ENCODE measurements at regions of chrX and their contacts with region 1.

Region 1: GRCh38 chrX:48696301-48697181 is at the start of gene SUV39H1:
- DNase-seq: peak; percentile 81
- ATAC-seq: peak; percentile 98
- H3K4me3 ChIP-seq: peak within 1 kb of the TSS; percentile 64
- H3K27ac ChIP-seq: peak within 1 kb of the TSS; percentile 66
- H3K4me1 ChIP-seq: peaks cover 8% of the 10 kb centered on the region; the same call in 1 of the 2 replicates
- H3K27me3 ChIP-seq: no peaks in the 10 kb centered on the region
- CTCF ChIP-seq: no peak
- POLR2A ChIP-seq: no peak; the same call in 1 of the 2 replicates
- RAD21 ChIP-seq: no peak
- total RNA-seq, gene SUV39H1: 6.6 and 7.2 TPM in 2 replicates

Region 2: DNA sequence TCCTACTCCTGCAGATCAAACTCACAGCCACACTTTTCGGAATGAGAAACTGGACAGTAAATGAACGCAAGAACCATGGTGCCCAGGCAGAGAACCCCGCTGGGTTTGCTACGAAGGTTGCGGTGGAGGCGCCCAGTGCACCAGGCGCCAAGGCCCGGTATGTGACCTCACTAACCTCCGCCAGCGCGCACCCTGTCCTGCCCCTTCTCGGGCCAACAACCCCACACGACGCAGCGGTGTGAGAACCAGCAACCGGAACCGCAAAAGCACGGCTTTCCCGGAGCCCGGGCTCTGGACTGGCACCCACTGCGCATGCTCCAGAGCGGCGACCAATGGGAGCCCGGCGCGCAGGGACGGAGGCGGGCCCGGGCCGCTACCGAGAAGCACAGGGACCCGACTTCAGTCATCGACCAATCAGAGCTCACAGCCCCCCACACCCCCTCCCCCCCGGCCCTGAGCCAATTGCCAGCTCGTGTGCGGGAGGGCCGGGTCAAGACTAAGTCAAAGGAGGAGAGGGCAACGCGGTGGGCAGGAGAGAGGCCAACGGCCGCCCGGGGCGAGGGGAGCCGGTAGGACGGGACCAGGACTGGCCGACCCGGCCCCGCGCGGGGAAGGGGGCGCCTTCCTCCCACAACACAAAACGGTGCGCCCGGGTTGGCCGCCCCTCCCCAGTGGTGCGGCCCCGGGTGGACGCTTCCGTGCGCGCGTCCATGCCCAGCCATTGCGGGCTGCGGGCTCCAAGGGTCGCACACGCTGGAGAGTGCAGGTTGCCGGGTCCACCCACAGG is 20.2 kb before region 1 on chrX:
- CTCF ChIA-PET with region 1: no interaction called
- POLR2A ChIA-PET with region 1: no interaction called
- dilution Hi-C with region 1: no loop called
- in situ Hi-C with region 1: no loop called
- intact Hi-C with region 1: loop called (anchors 2 kb)
- DNase-seq: peak; percentile 75
- ATAC-seq: peak; percentile 99
- H3K4me3 ChIP-seq: peak overlapping the region; percentile 77
- H3K27ac ChIP-seq: peak overlapping the region; percentile 61
- H3K4me1 ChIP-seq: no peaks in the 10 kb centered on the region
- H3K27me3 ChIP-seq: no peaks in the 10 kb centered on the region; the same call in 1 of the 2 replicates
- CTCF ChIP-seq: no peak
- POLR2A ChIP-seq: no peak
- RAD21 ChIP-seq: no peak

Region 3: GRCh38 chrX:48801280-48802088 is 104.9 kb after region 1 on chrX and contains the start of gene HDAC6:
- CTCF ChIA-PET with region 1: no interaction called
- POLR2A ChIA-PET with region 1: no interaction called
- dilution Hi-C with region 1: no loop called
- in situ Hi-C with region 1: no loop called
- intact Hi-C with region 1: loop called (anchors 1 kb)
- DNase-seq: peak; percentile 98
- ATAC-seq: peak; percentile 88
- H3K4me3 ChIP-seq: peak within 1 kb of the TSS; percentile 84
- H3K27ac ChIP-seq: peak within 1 kb of the TSS; percentile 89
- H3K4me1 ChIP-seq: 0 out of 2 replicates have a peak, but pooled peaks cover 3% of the 10 kb centered on the region
- H3K27me3 ChIP-seq: no peaks in the 10 kb centered on the region
- CTCF ChIP-seq: no peak
- POLR2A ChIP-seq: no peak
- RAD21 ChIP-seq: no peak
- total RNA-seq, gene HDAC6: 14.7 and 16.8 TPM in 2 replicates

Region 4: DNA sequence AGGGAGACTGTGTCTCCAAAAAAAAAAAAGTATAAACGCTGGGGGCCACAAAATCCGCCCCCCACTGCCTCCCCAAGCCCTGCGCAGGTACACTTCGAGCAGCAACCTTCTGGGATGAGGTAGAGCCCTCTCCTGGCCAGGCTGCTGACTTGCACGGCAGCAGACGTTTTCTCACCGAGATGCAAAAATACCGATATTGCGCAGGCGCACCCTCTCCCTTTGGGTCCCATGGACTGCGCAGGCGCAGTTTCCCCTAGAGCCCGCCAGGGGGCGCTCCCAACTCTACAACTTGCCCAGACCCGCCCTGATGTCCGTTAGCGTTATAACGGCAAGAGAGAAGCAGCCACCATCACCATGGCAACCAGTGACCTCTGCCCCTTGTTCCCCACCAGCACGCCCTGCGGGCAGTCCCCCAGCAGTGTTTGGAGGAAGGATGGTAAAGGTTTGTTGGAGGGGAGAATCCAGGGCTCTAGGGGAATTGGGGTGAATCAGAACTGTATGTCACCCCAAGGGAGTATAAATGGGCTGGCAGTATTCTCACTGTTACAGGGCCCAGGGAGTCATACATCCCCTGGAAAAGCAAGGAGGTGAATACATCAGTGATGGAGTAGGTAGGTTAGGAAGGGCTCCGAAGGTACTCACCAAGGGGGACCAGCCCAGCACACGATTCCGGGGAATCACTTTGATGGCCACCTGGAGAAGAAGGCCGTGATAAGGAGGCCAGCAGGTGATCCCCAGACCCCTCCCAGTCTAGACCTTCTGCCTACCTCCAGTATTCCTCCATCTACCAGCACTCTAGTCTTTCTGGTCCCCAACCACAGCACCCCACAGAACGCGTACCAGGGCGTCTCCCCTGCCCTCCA is 220.8 kb after region 1 on chrX:
- CTCF ChIA-PET with region 1: no interaction called
- POLR2A ChIA-PET with region 1: no interaction called
- dilution Hi-C with region 1: no loop called
- in situ Hi-C with region 1: no loop called
- intact Hi-C with region 1: loop called (anchors 2 kb)
- DNase-seq: peak; percentile 85
- ATAC-seq: peak; percentile 70
- H3K4me3 ChIP-seq: no peak overlapping the region
- H3K27ac ChIP-seq: no peak overlapping the region
- H3K4me1 ChIP-seq: peaks cover 3% of the 10 kb centered on the region; the same call in 1 of the 2 replicates
- H3K27me3 ChIP-seq: no peaks in the 10 kb centered on the region
- CTCF ChIP-seq: peak; percentile 91
- POLR2A ChIP-seq: no peak
- RAD21 ChIP-seq: peak; percentile 46

Measured in IMR-90 (cell line).